ENCODE measurements at regions of chr9 and their contacts with region 1.

Region 1: DNA sequence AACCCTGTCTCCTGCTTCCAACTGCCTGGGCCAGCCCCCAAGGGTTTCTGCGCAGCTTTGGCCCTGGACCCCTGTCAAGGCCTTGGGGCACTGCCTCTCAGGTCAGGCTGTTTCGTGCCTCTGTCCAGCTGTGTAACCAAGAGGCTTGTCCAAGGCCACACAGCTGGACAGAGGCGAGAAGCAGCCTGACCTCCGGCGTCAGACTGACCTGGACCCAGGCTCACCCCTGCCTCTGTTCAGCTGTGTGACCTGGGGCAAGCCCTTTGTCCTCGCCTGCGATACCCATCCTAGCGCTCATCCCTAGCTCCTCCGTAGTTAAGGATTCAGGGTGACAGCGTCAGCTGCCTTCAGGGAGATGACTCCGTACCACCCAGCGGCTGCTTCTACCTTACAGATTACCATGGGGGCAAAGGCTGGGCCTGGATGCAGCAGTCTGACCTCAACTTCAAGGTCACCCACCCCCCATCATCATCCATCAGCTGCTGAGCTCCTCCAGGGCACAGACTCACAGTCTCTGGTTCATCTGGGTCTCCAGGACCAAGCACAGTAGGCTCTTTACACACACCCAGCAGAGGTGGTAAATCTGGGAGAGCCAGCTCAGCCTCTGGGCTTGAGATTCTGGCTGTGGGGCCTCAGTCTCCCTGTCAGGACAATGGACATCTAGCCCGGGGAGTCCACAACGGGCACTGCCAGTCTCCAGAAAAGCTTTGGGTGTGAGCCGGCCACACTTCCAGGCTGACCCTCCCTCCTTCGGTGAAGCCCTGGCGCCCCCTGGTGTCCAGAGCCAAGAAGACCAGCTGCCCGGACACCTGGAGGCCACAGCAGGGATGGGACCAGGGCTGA is 7.9 kb downstream of the AK1 start:
- DNase-seq: peak; percentile 98

Region 2: GRCh38 chr9:126532019-126532462 is 1337.5 kb before region 1 on chr9:
- intact Hi-C with region 1: no loop called
- DNase-seq: peak; percentile 68

Region 3: DNA sequence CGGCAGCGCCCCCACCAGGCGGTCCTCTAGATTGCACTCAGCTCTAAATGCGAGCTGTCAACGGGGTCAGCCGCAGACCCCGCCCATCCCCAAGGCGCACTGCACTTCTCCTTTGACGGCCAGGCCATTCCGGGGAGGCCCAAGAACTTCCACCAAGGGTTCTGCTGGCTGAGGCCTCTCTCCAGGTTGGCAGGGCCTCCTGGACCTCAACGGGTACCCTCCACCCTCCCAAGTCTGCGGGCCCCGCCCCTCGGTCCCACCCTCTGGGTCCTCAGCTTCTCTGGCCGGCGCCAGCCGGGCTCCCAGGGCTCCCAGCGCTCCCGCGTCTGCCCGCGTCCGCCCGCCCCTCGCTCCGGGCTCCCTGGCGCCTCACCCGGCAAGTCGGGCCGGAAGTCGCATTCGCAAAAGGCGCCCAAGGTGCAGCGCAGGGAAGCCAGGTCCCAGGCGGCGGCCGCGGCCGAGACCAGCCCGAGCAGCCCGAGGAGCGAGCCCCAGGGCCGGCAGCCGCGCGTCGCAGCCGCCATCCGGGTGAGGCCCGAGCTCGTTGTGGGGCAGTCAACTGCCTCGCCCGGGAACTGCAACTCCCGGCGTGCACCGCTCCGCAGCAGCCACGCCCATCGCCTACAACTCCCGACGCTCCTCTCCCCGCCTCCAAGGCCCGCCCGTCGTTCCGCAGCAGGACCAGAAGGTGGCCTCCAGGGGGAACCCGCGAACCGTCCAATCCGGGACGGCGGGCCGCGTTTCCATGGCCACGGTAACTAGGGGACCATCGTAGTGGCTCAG is 134.6 kb before region 1 on chr9 and contains the start of gene TOR2A:
- intact Hi-C with region 1: loop called (anchors 5 to 10 kb)
- DNase-seq: peak; percentile 100
- total RNA-seq, gene TOR2A: 4.9 to 8.2 TPM

Region 4: GRCh38 chr9:127770905-127771569 is 98.5 kb before region 1 on chr9:
- intact Hi-C with region 1: no loop called
- DNase-seq: peak; percentile 100

Region 5: GRCh38 chr9:127785023-127785932 is 84.3 kb before region 1 on chr9:
- intact Hi-C with region 1: loop called (anchors 5 kb)
- DNase-seq: peak; percentile 96

Region 6: DNA sequence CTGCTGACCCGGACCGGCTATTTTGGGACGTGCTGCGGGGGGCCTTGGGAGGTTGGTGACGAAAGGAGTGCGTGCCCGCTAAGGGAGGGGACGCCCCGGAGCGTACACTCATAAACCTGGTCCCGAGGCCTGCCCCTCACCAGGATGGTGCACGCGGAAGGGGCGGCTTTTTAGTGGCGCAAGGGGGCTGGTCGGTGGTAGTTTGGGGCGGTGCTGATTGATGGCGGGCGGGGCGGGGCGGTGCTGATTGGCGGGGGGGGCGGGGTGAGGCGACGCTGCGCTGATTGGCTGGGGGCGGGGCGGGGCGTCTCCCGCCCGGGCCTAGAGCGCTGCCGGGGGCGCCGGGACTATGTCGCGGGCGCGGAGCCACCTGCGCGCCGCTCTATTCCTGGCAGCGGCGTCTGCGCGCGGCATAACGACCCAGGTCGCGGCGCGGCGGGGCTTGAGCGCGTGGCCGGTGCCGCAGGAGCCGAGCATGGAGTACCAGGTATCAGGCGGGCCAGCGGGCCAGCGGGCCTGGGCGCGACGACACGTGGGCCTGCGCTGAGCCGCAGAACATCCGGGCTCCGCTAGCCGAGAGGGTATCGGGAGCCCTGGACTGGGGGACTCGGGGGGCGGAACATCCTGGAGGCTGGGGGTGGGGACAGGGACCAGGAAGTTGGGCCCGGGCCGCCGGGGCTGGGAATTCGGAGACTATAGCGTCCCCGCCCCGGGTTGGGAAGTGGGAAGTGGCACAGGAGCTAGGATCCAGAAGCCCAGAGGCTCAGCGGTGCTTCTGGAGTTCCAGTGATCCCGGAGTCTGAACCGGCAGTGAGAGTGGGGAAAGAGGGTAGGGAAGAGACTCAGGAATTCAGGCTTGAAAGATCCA is 66.7 kb before region 1 on chr9 and contains the start of gene FPGS:
- intact Hi-C with region 1: loop called in 1 of 2 experiments (anchors 5 kb)
- DNase-seq: peak; percentile 96
- total RNA-seq, gene FPGS: 35.5 to 55.1 TPM

Region 7: DNA sequence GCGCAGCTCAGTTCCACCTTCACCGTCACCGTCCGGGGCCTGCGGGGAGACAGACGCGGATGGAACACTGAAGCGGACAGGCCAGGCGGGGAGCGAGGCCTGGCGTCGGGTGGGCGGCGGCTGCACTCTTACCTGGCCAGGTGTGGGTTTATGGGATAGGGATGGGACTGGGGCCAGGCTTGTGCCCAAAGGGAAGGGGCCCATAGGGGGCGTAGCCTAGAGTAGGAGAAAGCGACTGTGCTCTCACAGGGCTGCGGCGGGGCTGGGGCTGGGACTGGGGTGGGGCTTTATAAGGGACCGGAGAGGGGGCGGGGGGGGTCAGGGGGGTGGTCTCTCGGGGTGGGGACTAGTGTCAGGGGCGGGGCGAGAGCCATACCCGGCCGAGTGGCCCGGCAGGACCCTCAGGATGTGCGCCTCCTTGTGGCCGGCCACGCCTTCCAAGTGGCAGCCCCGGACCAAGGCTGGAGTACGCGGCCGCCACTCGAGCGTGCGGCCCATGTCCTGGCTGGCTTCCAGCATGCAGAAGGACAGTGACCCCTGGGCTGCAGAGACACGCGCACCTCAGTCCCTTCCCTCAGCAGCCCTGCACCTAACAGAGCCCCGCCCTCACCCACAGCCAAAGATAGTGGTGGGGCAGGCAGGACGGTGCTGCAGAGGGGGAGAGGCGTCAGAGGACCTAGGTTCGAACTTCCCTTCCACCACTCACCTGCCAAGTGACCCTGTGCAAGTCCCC is 44.0 kb before region 1 on chr9:
- intact Hi-C with region 1: loop called in 1 of 2 experiments (anchors 2 kb)
- DNase-seq: no peak

Region 8: GRCh38 chr9:127910613-127911205 is 41.2 kb after region 1 on chr9:
- intact Hi-C with region 1: loop called in 1 of 2 experiments (anchors 2 kb)
- DNase-seq: no peak

Region 9: GRCh38 chr9:128117613-128118471 is 248.3 kb after region 1 on chr9:
- intact Hi-C with region 1: loop called in 1 of 2 experiments (anchors 10 kb)
- DNase-seq: peak; percentile 99